ENCODE measurements at regions of chr1 and their contacts with region 1.

Region 1: GRCh38 chr1:41728403-41729202 is 190.1 kb downstream of the HIVEP3 start:
- DNase-seq: peak; percentile 72
- ATAC-seq: peak; percentile 80
- H3K4me3 Mint-ChIP-seq: peak overlapping the region; percentile 80
- H3K27ac Mint-ChIP-seq: peak overlapping the region; percentile 93
- H3K4me1 Mint-ChIP-seq: peaks cover 74% of the 10 kb centered on the region
- H3K27me3 Mint-ChIP-seq: no peaks in the 10 kb centered on the region
- CTCF ChIP-seq: no peak

Region 2: GRCh38 chr1:40691538-40692428 is 1036.8 kb before region 1 on chr1 and contains the start of gene NFYC:
- CTCF ChIA-PET with region 1: no interaction called
- POLR2A ChIA-PET with region 1: no interaction called
- intact Hi-C with region 1: loop called (anchors 10 kb)
- DNase-seq: peak; percentile 86
- ATAC-seq: peak; percentile 81
- H3K4me3 Mint-ChIP-seq: peak within 1 kb of the TSS; percentile 94
- H3K27ac Mint-ChIP-seq: peak within 1 kb of the TSS; percentile 94
- H3K4me1 Mint-ChIP-seq: peaks cover 70% of the 10 kb centered on the region
- H3K27me3 Mint-ChIP-seq: no peaks in the 10 kb centered on the region
- CTCF ChIP-seq: no peak
- total RNA-seq, gene NFYC: 68.7 and 76.0 TPM in 2 replicates

Region 3: GRCh38 chr1:41662061-41662764 is 66.4 kb before region 1 on chr1:
- CTCF ChIA-PET with region 1: interaction called, 5 read pairs
- POLR2A ChIA-PET with region 1: interaction called, 40 read pairs
- intact Hi-C with region 1: loop called (anchors 1 kb)
- DNase-seq: peak; percentile 73
- ATAC-seq: peak; percentile 78
- H3K4me3 Mint-ChIP-seq: peak overlapping the region; percentile 74
- H3K27ac Mint-ChIP-seq: no peak overlapping the region
- H3K4me1 Mint-ChIP-seq: peaks cover 78% of the 10 kb centered on the region
- H3K27me3 Mint-ChIP-seq: no peaks in the 10 kb centered on the region
- CTCF ChIP-seq: no peak

Region 4: GRCh38 chr1:41698916-41699860 is 29.4 kb before region 1 on chr1:
- CTCF ChIA-PET with region 1: interaction called, 3 read pairs
- POLR2A ChIA-PET with region 1: interaction called, 3 read pairs
- intact Hi-C with region 1: loop called (anchors 2 kb)
- DNase-seq: peak; percentile 38
- ATAC-seq: peak; percentile 94
- H3K4me3 Mint-ChIP-seq: no peak overlapping the region
- H3K27ac Mint-ChIP-seq: peak overlapping the region; percentile 65
- H3K4me1 Mint-ChIP-seq: peaks cover 13% of the 10 kb centered on the region
- H3K27me3 Mint-ChIP-seq: no peaks in the 10 kb centered on the region
- CTCF ChIP-seq: no peak

Region 5: DNA sequence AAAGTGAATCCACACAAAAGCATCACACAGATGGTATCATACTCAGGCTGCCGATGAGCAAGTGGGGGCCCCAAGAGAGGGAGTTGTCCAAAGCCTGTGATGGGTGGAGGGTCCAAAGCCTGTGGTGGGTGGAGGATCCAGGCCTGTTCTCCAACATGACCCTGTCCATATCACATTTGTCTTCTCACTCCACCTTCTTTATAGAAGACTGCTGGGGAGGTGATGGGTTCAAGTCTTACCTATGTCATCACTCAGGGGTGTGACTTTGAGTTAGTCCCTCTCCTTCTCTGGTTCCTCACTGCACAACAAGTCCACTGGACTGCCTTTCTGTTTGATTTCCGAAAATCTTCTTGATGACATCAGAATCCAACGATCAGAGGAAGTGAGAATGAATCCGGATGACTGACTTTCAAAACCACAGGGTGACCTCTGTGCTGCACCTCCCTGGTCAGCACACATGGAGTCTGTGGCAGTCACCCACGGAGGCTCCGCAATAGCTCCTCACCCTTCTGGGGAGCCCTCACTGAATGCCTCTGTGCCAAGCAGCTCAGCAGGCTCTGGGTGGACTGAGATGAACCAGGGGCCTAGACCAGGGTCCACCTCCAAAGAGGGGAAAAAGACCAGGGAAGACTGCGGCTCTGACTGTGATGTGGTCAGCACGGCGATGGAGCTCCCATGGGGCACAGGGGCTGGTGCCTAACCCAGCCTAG is 23.4 kb after region 1 on chr1:
- CTCF ChIA-PET with region 1: interaction called, 20 read pairs
- POLR2A ChIA-PET with region 1: interaction called, 138 read pairs
- intact Hi-C with region 1: loop called (anchors 1 kb)
- DNase-seq: no peak
- ATAC-seq: peak; percentile 29
- H3K4me3 Mint-ChIP-seq: peak overlapping the region; percentile 68
- H3K27ac Mint-ChIP-seq: peak overlapping the region; percentile 89
- H3K4me1 Mint-ChIP-seq: peaks cover 65% of the 10 kb centered on the region
- H3K27me3 Mint-ChIP-seq: no peaks in the 10 kb centered on the region
- CTCF ChIP-seq: no peak

Region 6: GRCh38 chr1:41800246-41800902 is 71.8 kb after region 1 on chr1:
- CTCF ChIA-PET with region 1: interaction called, 8 read pairs
- POLR2A ChIA-PET with region 1: interaction called, 9 read pairs
- intact Hi-C with region 1: loop called (anchors 2 kb)
- DNase-seq: no peak
- ATAC-seq: peak; percentile 73
- H3K4me3 Mint-ChIP-seq: peak overlapping the region; percentile 39
- H3K27ac Mint-ChIP-seq: no peak overlapping the region
- H3K4me1 Mint-ChIP-seq: peaks cover 60% of the 10 kb centered on the region
- H3K27me3 Mint-ChIP-seq: no peaks in the 10 kb centered on the region
- CTCF ChIP-seq: no peak

Region 7: DNA sequence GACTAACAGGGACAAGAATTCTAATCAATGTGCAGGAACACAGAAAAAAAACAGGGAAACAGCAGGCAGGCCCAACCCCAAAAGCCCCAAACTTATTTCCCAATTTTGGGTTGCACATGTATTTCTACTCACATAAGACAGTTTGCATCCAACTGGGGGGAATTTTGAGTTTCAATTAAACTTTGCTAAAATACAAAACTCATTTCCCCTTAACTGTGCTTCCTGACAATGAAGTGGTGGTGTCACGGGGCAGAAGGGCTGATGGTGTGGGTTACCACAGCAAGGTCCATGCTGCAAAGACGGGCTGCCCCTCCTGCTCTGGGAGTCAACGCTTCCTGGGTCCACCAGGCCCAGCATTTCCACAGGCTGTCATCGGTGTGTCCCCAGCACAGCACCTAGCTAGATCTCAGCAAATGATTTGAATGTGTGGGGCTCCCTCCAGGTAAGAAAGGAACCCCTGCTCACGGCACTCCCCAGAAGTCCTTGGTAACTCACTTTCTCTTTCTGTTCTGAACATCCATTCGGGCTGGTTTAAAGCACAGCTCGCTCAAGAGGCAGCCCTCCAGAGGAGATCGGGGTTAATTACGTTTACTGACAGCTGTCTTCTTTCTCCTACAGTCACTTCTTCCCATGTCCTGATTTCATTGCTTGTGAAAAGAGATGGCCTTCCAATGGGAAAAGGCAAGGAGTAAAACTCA is 162.7 kb after region 1 on chr1:
- CTCF ChIA-PET with region 1: interaction called, 6 read pairs
- POLR2A ChIA-PET with region 1: interaction called, 5 read pairs
- intact Hi-C with region 1: loop called (anchors 1 kb)
- DNase-seq: peak; percentile 39
- ATAC-seq: peak; percentile 98
- H3K4me3 Mint-ChIP-seq: peak overlapping the region; percentile 83
- H3K27ac Mint-ChIP-seq: peak overlapping the region; percentile 88
- H3K4me1 Mint-ChIP-seq: peaks cover 15% of the 10 kb centered on the region
- H3K27me3 Mint-ChIP-seq: no peaks in the 10 kb centered on the region
- CTCF ChIP-seq: no peak

Region 8: GRCh38 chr1:41950820-41951219 is 222.2 kb after region 1 on chr1:
- CTCF ChIA-PET with region 1: no interaction called
- POLR2A ChIA-PET with region 1: no interaction called
- intact Hi-C with region 1: no loop called
- DNase-seq: no peak
- ATAC-seq: no peak
- H3K4me3 Mint-ChIP-seq: no peak overlapping the region
- H3K27ac Mint-ChIP-seq: no peak overlapping the region
- H3K4me1 Mint-ChIP-seq: no peaks in the 10 kb centered on the region
- H3K27me3 Mint-ChIP-seq: peaks cover 7% of the 10 kb centered on the region
- CTCF ChIP-seq: no peak

Region 9: GRCh38 chr1:42403880-42404400 is 675.3 kb after region 1 on chr1:
- CTCF ChIA-PET with region 1: no interaction called
- POLR2A ChIA-PET with region 1: no interaction called
- intact Hi-C with region 1: no loop called
- DNase-seq: no peak
- ATAC-seq: no peak
- H3K4me3 Mint-ChIP-seq: no peak overlapping the region
- H3K27ac Mint-ChIP-seq: no peak overlapping the region
- H3K4me1 Mint-ChIP-seq: no peaks in the 10 kb centered on the region
- H3K27me3 Mint-ChIP-seq: peaks cover 9% of the 10 kb centered on the region
- CTCF ChIP-seq: no peak